Posterior vena cava (tissue), 2 donors: ENCODE measurements at regions of chr17 and their contacts with region 1.

Region 1: DNA sequence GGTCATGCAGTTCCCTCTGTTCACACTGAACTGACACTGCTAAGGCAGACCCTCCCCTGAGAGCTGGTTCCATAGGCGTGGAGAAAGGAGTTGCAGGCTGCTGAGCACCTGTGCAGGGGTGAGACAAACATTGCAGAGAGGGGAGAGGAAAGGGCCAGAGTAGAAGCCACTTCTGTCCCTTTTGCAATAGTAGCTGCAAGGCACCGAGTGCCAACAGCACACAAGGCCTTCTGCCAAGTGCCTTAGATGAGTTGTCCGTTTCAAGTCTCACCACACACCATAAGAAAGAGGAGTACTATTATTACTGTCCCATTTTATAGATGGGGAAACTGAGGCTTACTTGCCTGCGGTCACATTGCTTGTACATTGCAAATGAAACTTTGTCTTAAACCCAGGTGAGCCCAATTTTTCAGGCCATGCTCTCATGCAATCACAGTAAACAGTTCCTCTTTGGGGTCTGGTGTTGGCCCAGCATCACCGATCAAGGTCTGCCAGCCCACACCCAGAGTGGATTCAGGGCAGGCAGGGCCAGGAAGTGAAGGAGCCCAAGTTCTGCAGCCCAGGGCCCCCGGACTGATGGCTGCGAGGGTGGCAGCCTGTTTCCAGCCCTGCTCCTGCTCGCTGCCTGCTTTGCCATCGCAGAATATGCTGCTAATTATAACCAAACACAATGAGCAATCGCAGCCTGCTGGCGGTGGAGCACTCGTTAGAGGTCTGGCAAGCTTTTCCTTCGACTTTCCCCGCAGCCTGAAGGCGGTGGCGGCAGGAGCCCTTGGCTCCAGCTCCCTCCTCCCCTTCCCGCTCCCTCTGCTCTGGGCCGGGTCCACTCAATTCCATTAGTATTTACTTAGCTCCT is 36.8 kb upstream of the DYNLL2 start:
- DNase-seq: no peak

Region 2: DNA sequence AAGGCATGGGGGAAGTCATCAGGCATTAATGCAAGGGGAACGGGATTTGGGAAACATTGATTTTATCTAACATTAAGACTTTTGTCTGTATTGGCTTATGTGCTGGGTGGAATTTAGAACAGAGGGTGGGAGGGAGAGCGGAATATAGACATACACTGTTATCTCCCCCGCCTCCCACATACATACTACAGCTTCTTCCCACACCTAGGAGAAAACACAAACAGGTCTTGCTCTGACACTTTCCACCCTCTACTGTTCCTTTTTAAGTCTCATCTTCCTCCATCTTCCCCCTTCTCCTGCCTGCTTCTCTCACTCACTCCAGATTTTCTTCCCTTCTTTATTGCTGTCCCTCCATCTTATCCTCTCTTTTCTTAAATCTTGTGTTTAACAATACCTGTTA is 102.1 kb after region 1 on chr17:
- intact Hi-C with region 1: loop called in 1 of 2 experiments (anchors 10 kb)
- DNase-seq: no peak